HCT116 (cell line): ENCODE measurements at regions of chr1 and their contacts with region 1.

Region 1: DNA sequence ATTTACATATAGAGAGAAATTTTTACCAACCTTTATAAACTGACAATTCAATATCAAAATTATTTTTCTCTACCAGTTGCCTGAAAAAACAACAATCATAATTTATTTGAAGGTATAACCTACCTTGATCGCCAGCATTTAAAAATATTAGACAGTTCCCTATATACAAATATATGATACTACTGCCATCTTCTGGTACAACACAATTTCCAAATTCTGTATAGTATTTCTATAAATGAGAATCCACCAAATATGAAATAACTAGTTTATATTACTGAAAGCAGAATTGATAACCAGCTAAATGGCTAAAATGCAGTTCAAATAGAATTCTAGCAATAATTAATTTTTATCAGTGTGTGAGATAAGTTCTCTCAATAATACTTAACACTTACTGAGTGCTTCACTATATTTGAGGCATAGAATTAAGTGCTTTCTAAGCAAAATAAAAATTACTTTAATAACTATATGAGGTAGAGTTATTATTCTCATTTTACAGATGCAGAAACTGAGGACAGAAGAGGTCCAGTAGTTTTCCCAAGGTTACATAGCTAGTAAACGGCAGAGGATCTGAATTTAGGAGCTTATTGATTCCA is 75.6 kb downstream of the PIGK start:
- DNase-seq: no peak
- ATAC-seq: no peak
- H3K4me3 ChIP-seq: no peak overlapping the region
- H3K27ac ChIP-seq: no peak overlapping the region
- H3K4me1 ChIP-seq: no peaks in the 10 kb centered on the region
- H3K27me3 ChIP-seq: no peaks in the 10 kb centered on the region
- CTCF ChIP-seq: peak in 2 of 3 experiments; percentile 36 to 61; a peak in 3 of 6 replicates
- POLR2A ChIP-seq: no peak
- RAD21 ChIP-seq: peak; percentile 57

Region 2: GRCh38 chr1:75908717-75909152 is 1234.9 kb before region 1 on chr1:
- CTCF ChIA-PET with region 1: interaction called, 4 read pairs
- POLR2A ChIA-PET with region 1: no interaction called
- RAD21 ChIA-PET with region 1: no interaction called
- intact Hi-C with region 1: loop called (anchors 1 kb)
- DNase-seq: peak; percentile 40
- ATAC-seq: peak; percentile 95
- H3K4me3 ChIP-seq: no peak overlapping the region
- H3K27ac ChIP-seq: no peak overlapping the region
- H3K4me1 ChIP-seq: no peaks in the 10 kb centered on the region
- H3K27me3 ChIP-seq: no peaks in the 10 kb centered on the region
- CTCF ChIP-seq: peak; percentile 44 to 71 (median 61); a peak in 5 of 6 replicates
- POLR2A ChIP-seq: no peak
- RAD21 ChIP-seq: peak; percentile 86

Region 3: GRCh38 chr1:76154206-76154956 is 989.2 kb before region 1 on chr1:
- CTCF ChIA-PET with region 1: interaction called, 8 read pairs
- POLR2A ChIA-PET with region 1: no interaction called
- RAD21 ChIA-PET with region 1: no interaction called
- intact Hi-C with region 1: loop called (anchors 5 kb)
- DNase-seq: peak; percentile 50
- ATAC-seq: peak; percentile 96
- H3K4me3 ChIP-seq: no peak overlapping the region
- H3K27ac ChIP-seq: peak overlapping the region; percentile 31
- H3K4me1 ChIP-seq: peaks cover 3 to 33% of the 10 kb centered on the region in 2 experiments; a peak in 3 of 4 replicates
- H3K27me3 ChIP-seq: no peaks in the 10 kb centered on the region
- CTCF ChIP-seq: peak; percentile 76 to 98 (median 96)
- POLR2A ChIP-seq: no peak
- RAD21 ChIP-seq: peak; percentile 95

Region 4: GRCh38 chr1:76759950-76760349 is 383.7 kb before region 1 on chr1:
- CTCF ChIA-PET with region 1: no interaction called
- POLR2A ChIA-PET with region 1: no interaction called
- RAD21 ChIA-PET with region 1: no interaction called
- intact Hi-C with region 1: no loop called
- DNase-seq: no peak
- ATAC-seq: no peak
- H3K4me3 ChIP-seq: no peak overlapping the region
- H3K27ac ChIP-seq: no peak overlapping the region
- H3K4me1 ChIP-seq: no peaks in the 10 kb centered on the region
- H3K27me3 ChIP-seq: no peaks in the 10 kb centered on the region
- CTCF ChIP-seq: no peak
- POLR2A ChIP-seq: no peak
- RAD21 ChIP-seq: no peak

Region 5: GRCh38 chr1:77188770-77189169 is 45.1 kb after region 1 on chr1:
- CTCF ChIA-PET with region 1: no interaction called
- POLR2A ChIA-PET with region 1: no interaction called
- RAD21 ChIA-PET with region 1: no interaction called
- intact Hi-C with region 1: no loop called
- DNase-seq: no peak
- ATAC-seq: no peak
- H3K4me3 ChIP-seq: no peak overlapping the region
- H3K27ac ChIP-seq: no peak overlapping the region
- H3K4me1 ChIP-seq: no peaks in the 10 kb centered on the region
- H3K27me3 ChIP-seq: no peaks in the 10 kb centered on the region
- CTCF ChIP-seq: no peak
- POLR2A ChIP-seq: no peak
- RAD21 ChIP-seq: no peak

Region 6: GRCh38 chr1:77416692-77417450 is 273.2 kb after region 1 on chr1:
- CTCF ChIA-PET with region 1: no interaction called
- POLR2A ChIA-PET with region 1: no interaction called
- RAD21 ChIA-PET with region 1: no interaction called
- intact Hi-C with region 1: loop called (anchors 2 kb)
- DNase-seq: peak; percentile 48
- ATAC-seq: peak; percentile 82
- H3K4me3 ChIP-seq: no peak overlapping the region
- H3K27ac ChIP-seq: no peak overlapping the region
- H3K4me1 ChIP-seq: peaks cover 0 to 9% of the 10 kb centered on the region in 2 experiments; a peak in 2 of 4 replicates
- H3K27me3 ChIP-seq: no peaks in the 10 kb centered on the region
- CTCF ChIP-seq: peak; percentile 29 to 72 (median 69); a peak in 5 of 6 replicates
- POLR2A ChIP-seq: no peak
- RAD21 ChIP-seq: peak; percentile 46; the same call in 1 of the 2 replicates

Region 7: GRCh38 chr1:77489910-77490309 is 346.3 kb after region 1 on chr1:
- CTCF ChIA-PET with region 1: no interaction called
- POLR2A ChIA-PET with region 1: no interaction called
- RAD21 ChIA-PET with region 1: no interaction called
- intact Hi-C with region 1: no loop called
- DNase-seq: no peak
- ATAC-seq: no peak
- H3K4me3 ChIP-seq: no peak overlapping the region
- H3K27ac ChIP-seq: no peak overlapping the region
- H3K4me1 ChIP-seq: no peaks in the 10 kb centered on the region
- H3K27me3 ChIP-seq: no peaks in the 10 kb centered on the region
- CTCF ChIP-seq: no peak
- POLR2A ChIP-seq: no peak
- RAD21 ChIP-seq: no peak

Region 8: DNA sequence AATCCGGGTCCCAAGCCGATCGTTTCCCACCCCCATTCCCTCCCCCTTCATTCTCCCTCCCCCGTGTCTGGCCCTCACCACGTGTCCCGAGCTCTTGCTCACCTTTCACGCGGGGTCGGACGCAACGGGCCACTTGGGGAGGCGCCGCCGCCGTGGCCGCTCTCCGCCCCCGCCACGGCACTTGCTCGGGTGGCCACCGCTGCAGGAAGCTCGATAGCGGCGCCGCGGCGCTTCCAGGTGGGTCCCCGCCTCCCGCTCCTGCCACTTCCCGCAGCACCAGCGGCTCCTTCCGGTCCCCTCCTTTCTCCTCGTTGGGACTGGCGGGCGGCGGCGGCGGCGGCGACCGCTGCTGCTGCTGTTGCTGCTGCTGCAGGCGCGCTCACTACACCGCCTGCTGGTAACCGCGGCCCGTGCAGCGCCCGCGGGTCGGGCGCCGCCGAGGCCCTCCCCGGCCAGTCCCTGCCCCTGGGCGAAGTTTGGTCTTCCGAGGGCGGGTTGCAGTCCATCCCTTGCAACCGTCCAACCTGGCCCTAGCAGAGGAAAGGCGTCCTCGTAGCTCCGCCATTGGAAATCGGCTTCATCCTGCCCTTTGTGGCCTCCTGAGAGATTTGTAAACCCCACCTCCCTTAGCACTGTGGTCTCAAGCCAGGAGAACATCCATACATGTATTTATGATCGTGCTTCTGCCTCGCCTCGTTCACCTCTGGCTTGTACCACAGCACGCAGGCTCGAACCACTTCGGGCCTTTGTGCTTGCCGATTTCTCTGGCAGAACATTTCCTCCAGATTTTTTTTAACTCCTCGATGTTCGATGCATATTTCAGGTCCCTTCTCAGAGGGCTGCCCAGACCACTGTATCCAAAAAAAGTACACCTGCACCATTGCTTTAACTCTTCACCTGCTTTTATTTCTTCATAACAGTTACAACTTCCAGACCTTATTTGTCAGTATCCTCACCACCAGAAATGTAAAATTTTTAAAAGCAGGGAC is 539.8 kb after region 1 on chr1:
- CTCF ChIA-PET with region 1: no interaction called
- POLR2A ChIA-PET with region 1: no interaction called
- RAD21 ChIA-PET with region 1: no interaction called
- intact Hi-C with region 1: loop called (anchors 1 kb)
- DNase-seq: peak; percentile 77
- ATAC-seq: peak; percentile 73
- H3K4me3 ChIP-seq: peak overlapping the region; percentile 82 to 97
- H3K27ac ChIP-seq: peak overlapping the region; percentile 96
- H3K4me1 ChIP-seq: peaks cover 6 to 35% of the 10 kb centered on the region in 2 experiments; a peak in 3 of 4 replicates
- H3K27me3 ChIP-seq: no peaks in the 10 kb centered on the region
- CTCF ChIP-seq: peak; percentile 36 to 78 (median 69); a peak in 5 of 6 replicates
- POLR2A ChIP-seq: peak; percentile 58
- RAD21 ChIP-seq: peak; percentile 61

Region 9: DNA sequence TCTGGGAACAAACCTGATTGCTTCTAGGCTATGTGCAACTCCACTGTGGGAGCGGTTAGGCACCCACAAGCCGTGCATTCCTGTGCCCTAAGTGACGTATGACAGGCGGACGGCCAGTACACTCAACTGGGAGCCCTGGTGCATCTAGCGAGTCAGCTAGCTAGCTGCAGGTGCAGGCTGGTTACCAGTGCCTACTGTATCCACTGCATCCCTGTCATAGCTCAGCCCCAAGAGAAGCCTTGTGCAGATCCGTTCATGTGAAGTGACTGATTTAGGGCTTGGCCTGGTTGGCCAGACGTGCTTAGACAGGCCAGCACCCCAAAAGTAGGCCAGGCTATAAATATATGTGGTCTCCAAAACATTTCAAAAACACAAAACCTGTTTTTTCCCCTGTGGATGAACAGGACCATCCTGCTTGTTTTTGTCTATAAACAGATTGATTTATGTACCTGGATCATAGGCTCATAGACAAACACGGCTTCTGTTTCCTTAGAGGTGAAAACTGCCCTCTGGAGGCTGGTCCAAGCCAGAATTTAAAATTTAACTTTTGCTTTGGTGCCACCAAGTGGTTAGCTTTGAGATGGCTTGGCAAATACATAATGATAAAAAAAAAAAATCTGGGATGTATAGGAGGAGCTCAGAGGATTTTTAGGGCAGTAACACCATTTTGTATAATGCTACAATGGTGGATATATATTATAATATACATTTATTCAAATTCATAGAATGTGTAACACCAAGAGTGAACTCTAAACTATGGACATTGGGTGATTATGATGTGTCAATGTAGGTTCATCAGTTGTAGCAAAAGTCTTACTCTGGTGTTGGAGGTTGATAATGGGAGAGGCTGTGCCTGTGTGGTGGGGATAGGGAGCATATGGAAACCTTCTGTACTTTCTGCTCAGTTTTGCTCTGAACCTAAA is 970.7 kb after region 1 on chr1:
- CTCF ChIA-PET with region 1: interaction called, 8 read pairs
- POLR2A ChIA-PET with region 1: no interaction called
- RAD21 ChIA-PET with region 1: no interaction called
- intact Hi-C with region 1: loop called (anchors 1 kb)
- DNase-seq: peak; percentile 73
- ATAC-seq: peak; percentile 86
- H3K4me3 ChIP-seq: no peak overlapping the region
- H3K27ac ChIP-seq: no peak overlapping the region
- H3K4me1 ChIP-seq: peaks cover 0 to 16% of the 10 kb centered on the region in 2 experiments; a peak in 2 of 4 replicates
- H3K27me3 ChIP-seq: no peaks in the 10 kb centered on the region
- CTCF ChIP-seq: peak; percentile 74 to 100 (median 92)
- POLR2A ChIP-seq: no peak
- RAD21 ChIP-seq: peak; percentile 99